CD4-positive, alpha-beta T cell (primary cell): ENCODE measurements at regions of chr7 and their contacts with region 1.

Region 1: GRCh38 chr7:83936056-83936708 is 258.4 kb downstream of the SEMA3A start:
- DNase-seq: peak; percentile 5 to 69 (median 34)
- ATAC-seq: peak; percentile 68
- H3K4me3 ChIP-seq: no peak overlapping the region
- H3K4me3 Mint-ChIP-seq: no peak overlapping the region
- H3K27ac ChIP-seq: no peak overlapping the region
- H3K27ac Mint-ChIP-seq: no peak overlapping the region
- H3K4me1 ChIP-seq: no peaks in the 10 kb centered on the region
- H3K4me1 Mint-ChIP-seq: no peaks in the 10 kb centered on the region
- H3K27me3 ChIP-seq: no peaks in the 10 kb centered on the region
- H3K27me3 Mint-ChIP-seq: peaks cover 3% of the 10 kb centered on the region
- CTCF ChIP-seq: peak; percentile 71

Region 2: GRCh38 chr7:83908526-83908925 is 27.7 kb before region 1 on chr7:
- CTCF ChIA-PET with region 1: no interaction called
- POLR2A ChIA-PET with region 1: no interaction called
- intact Hi-C with region 1: no loop called
- DNase-seq: peak in 1 of 14 experiments; percentile 0
- ATAC-seq: no peak
- H3K4me3 ChIP-seq: no peak overlapping the region
- H3K4me3 Mint-ChIP-seq: no peak overlapping the region
- H3K27ac ChIP-seq: no peak overlapping the region
- H3K27ac Mint-ChIP-seq: no peak overlapping the region
- H3K4me1 ChIP-seq: no peaks in the 10 kb centered on the region
- H3K4me1 Mint-ChIP-seq: no peaks in the 10 kb centered on the region
- H3K27me3 ChIP-seq: no peaks in the 10 kb centered on the region
- H3K27me3 Mint-ChIP-seq: no peaks in the 10 kb centered on the region
- CTCF ChIP-seq: no peak

Region 3: DNA sequence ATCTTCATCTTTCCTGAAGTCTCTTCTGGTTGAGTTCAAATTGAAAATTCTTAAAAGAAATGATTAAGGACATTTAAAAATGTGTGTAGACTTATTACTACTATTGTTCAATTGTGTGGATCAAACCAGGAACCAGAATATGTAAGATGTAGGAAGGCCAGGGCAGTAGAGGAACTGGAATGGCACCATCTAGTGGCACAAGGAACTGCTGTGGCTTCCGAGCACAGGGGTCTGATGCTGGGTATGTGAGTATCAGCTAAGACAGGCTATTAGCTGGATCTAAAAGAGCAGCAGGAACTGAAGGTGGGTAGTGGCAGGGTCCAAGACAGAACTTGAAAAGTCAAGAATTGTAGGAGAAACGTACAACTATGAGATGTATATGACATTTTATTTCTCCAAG is 11.1 kb after region 1 on chr7:
- CTCF ChIA-PET with region 1: no interaction called
- POLR2A ChIA-PET with region 1: no interaction called
- intact Hi-C with region 1: no loop called
- DNase-seq: peak in 1 of 14 experiments; percentile 7
- ATAC-seq: no peak
- H3K4me3 ChIP-seq: no peak overlapping the region
- H3K4me3 Mint-ChIP-seq: no peak overlapping the region
- H3K27ac ChIP-seq: no peak overlapping the region
- H3K27ac Mint-ChIP-seq: no peak overlapping the region
- H3K4me1 ChIP-seq: no peaks in the 10 kb centered on the region
- H3K4me1 Mint-ChIP-seq: no peaks in the 10 kb centered on the region
- H3K27me3 ChIP-seq: no peaks in the 10 kb centered on the region
- H3K27me3 Mint-ChIP-seq: no peaks in the 10 kb centered on the region
- CTCF ChIP-seq: no peak

Region 4: GRCh38 chr7:85023045-85023712 is 1087.0 kb after region 1 on chr7:
- CTCF ChIA-PET with region 1: no interaction called
- POLR2A ChIA-PET with region 1: no interaction called
- intact Hi-C with region 1: loop called (anchors 1 to 2 kb)
- DNase-seq: peak in 5 of 14 experiments; percentile 4 to 53 (median 38)
- ATAC-seq: no peak
- H3K4me3 ChIP-seq: no peak overlapping the region
- H3K4me3 Mint-ChIP-seq: no peak overlapping the region
- H3K27ac ChIP-seq: no peak overlapping the region
- H3K27ac Mint-ChIP-seq: no peak overlapping the region
- H3K4me1 ChIP-seq: no peaks in the 10 kb centered on the region
- H3K4me1 Mint-ChIP-seq: no peaks in the 10 kb centered on the region
- H3K27me3 ChIP-seq: no peaks in the 10 kb centered on the region
- H3K27me3 Mint-ChIP-seq: peaks cover 3% of the 10 kb centered on the region
- CTCF ChIP-seq: peak; percentile 68

Region 5: GRCh38 chr7:85554236-85555178 is 1618.3 kb after region 1 on chr7:
- CTCF ChIA-PET with region 1: interaction called, 3 read pairs
- POLR2A ChIA-PET with region 1: no interaction called
- intact Hi-C with region 1: loop called in 1 of 2 experiments (anchors 10 kb)
- DNase-seq: peak in 3 of 14 experiments; percentile 19 to 35 (median 27)
- ATAC-seq: peak; percentile 44
- H3K4me3 ChIP-seq: no peak overlapping the region
- H3K4me3 Mint-ChIP-seq: no peak overlapping the region
- H3K27ac ChIP-seq: no peak overlapping the region
- H3K27ac Mint-ChIP-seq: no peak overlapping the region
- H3K4me1 ChIP-seq: no peaks in the 10 kb centered on the region
- H3K4me1 Mint-ChIP-seq: no peaks in the 10 kb centered on the region
- H3K27me3 ChIP-seq: no peaks in the 10 kb centered on the region
- H3K27me3 Mint-ChIP-seq: no peaks in the 10 kb centered on the region
- CTCF ChIP-seq: peak; percentile 59